ENCODE measurements at regions of chr11 and their contacts with region 1.

Region 1: DNA sequence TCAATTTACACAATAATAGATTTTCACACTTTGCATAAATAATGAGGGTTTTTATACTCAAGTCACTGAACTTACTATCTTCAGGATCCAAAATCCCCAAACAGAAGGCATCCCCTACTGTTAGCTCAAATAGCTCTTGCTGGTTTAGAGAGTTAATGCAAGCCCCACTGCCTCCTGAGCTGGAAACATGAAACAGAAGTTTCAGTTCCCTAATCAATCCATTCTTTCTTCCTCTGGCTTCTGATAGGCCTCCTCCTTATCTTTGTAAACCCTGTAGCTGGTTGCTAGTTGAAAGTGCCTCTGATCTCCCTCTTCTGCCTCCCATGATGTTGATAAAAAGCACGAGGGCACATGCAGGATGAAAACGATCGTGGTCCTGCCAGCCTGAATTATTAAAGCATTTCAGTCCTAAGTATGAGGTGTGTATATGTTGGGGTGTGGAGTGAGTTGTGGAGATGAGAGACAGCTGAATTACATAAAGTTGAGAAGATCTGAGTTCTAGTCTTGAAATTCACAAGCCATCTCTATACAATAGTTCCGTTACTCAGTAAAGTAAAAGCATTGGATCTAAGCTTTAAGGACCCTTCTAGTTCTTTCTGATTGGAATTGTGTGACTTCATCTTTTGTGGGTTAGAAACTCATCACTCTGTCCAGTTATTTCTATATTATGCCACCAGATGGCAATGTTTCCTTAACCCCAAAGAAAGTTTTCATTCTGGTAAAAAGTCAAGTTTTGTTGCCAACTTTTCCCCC is 35.0 kb upstream of the EHF start:
- DNase-seq: no peak
- H3K4me3 ChIP-seq: no peak overlapping the region
- H3K27ac ChIP-seq: no peak overlapping the region
- H3K4me1 ChIP-seq: peaks cover 0 to 6% (median 2%) of the 10 kb centered on the region in 4 experiments; a peak in 2 of 7 replicates
- H3K27me3 ChIP-seq: no peaks in the 10 kb centered on the region
- CTCF ChIP-seq: peak in 2 of 3 experiments; percentile 40 to 58; a peak in 2 of 4 replicates
- EP300 ChIP-seq: no peak
- POLR2A ChIP-seq: no peak
- RAD21 ChIP-seq: peak; percentile 76 to 81

Region 2: GRCh38 chr11:34468209-34468841 is 117.6 kb before region 1 on chr11:
- CTCF ChIA-PET with region 1: no interaction called
- POLR2A ChIA-PET with region 1: no interaction called
- DNase-seq: peak; percentile 7 to 57
- H3K4me3 ChIP-seq: no peak overlapping the region
- H3K27ac ChIP-seq: no peak overlapping the region
- H3K4me1 ChIP-seq: no peaks in the 10 kb centered on the region
- H3K27me3 ChIP-seq: no peaks in the 10 kb centered on the region
- CTCF ChIP-seq: peak; percentile 2 to 74 (median 68)
- EP300 ChIP-seq: no peak
- POLR2A ChIP-seq: no peak
- RAD21 ChIP-seq: peak; percentile 77 to 79

Region 3: GRCh38 chr11:34565417-34566207 is 20.3 kb before region 1 on chr11:
- CTCF ChIA-PET with region 1: interaction called, 28 read pairs
- POLR2A ChIA-PET with region 1: no interaction called
- DNase-seq: peak in 1 of 2 experiments; percentile 17
- H3K4me3 ChIP-seq: no peak overlapping the region
- H3K27ac ChIP-seq: no peak overlapping the region
- H3K4me1 ChIP-seq: 0 out of 7 replicates have a peak, but pooled peaks cover 0 to 2% (median 0%) of the 10 kb centered on the region in 4 experiments
- H3K27me3 ChIP-seq: no peaks in the 10 kb centered on the region
- CTCF ChIP-seq: peak; percentile 60 to 89 (median 77)
- EP300 ChIP-seq: no peak
- POLR2A ChIP-seq: no peak
- RAD21 ChIP-seq: peak; percentile 86 to 90

Region 4: DNA sequence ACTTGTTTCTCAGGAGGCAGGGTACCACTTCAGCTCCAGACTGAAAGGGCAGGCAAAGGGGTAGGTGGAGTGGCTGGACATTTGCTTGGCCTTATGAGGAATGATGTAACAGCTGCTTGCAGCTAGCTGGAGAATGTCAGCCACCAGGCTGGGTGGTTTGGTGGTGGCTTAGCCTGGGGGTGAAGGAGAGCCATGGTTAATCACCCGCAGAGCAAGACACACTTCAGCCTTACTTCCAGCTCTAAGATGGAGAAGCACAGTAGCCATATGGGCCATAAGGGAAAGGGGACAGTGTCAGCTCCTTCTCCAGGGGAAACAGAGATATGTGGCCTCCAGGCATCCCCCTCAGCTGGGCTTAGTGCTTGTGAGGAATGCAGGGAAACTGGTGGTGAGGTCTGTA is 184.3 kb after region 1 on chr11:
- CTCF ChIA-PET with region 1: interaction called, 10 read pairs
- POLR2A ChIA-PET with region 1: no interaction called
- DNase-seq: no peak
- H3K4me3 ChIP-seq: no peak overlapping the region
- H3K27ac ChIP-seq: no peak overlapping the region
- H3K4me1 ChIP-seq: no peaks in the 10 kb centered on the region
- H3K27me3 ChIP-seq: no peaks in the 10 kb centered on the region
- CTCF ChIP-seq: no peak
- EP300 ChIP-seq: no peak
- POLR2A ChIP-seq: no peak
- RAD21 ChIP-seq: no peak

Region 5: GRCh38 chr11:34840736-34841386 is 254.9 kb after region 1 on chr11:
- CTCF ChIA-PET with region 1: interaction called, 16 read pairs
- POLR2A ChIA-PET with region 1: no interaction called
- DNase-seq: no peak
- H3K4me3 ChIP-seq: no peak overlapping the region
- H3K27ac ChIP-seq: no peak overlapping the region
- H3K4me1 ChIP-seq: peaks cover 0 to 4% (median 0%) of the 10 kb centered on the region in 4 experiments; a peak in 2 of 7 replicates
- H3K27me3 ChIP-seq: no peaks in the 10 kb centered on the region
- CTCF ChIP-seq: peak; percentile 60 to 84 (median 62)
- EP300 ChIP-seq: no peak
- POLR2A ChIP-seq: no peak
- RAD21 ChIP-seq: peak; percentile 51 to 57

Region 6: DNA sequence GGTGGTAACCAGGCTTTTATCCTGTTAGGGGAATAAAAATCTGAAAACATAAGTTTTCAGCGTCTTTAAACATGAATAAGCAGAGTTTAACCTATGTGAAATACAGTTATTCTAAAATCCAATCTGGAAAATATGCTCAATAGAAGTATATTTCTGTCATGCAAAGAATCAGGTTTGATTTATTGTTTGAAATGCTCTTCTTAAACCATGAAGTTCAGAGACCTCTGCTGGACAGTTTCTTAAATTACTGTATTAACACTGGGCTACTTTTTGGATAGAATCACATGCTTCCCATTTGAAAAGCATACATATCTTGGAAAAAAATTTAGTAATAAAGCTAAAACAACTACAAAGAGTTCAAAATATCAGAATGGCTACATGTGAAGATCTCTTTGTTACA is 304.9 kb after region 1 on chr11:
- CTCF ChIA-PET with region 1: interaction called, 48 read pairs
- POLR2A ChIA-PET with region 1: no interaction called
- DNase-seq: no peak
- H3K4me3 ChIP-seq: no peak overlapping the region
- H3K27ac ChIP-seq: no peak overlapping the region
- H3K4me1 ChIP-seq: no peaks in the 10 kb centered on the region
- H3K27me3 ChIP-seq: no peaks in the 10 kb centered on the region
- CTCF ChIP-seq: peak in 1 of 3 experiments; percentile 29; a peak in 2 of 4 replicates
- EP300 ChIP-seq: no peak
- POLR2A ChIP-seq: no peak
- RAD21 ChIP-seq: peak; percentile 44 to 54

Region 7: GRCh38 chr11:34907934-34908593 is 322.2 kb after region 1 on chr11:
- CTCF ChIA-PET with region 1: interaction called, 10 read pairs
- POLR2A ChIA-PET with region 1: no interaction called
- DNase-seq: no peak
- H3K4me3 ChIP-seq: peak overlapping the region in 1 of 4 experiments; percentile 3; a peak in 1 of 8 replicates
- H3K27ac ChIP-seq: no peak overlapping the region
- H3K4me1 ChIP-seq: peaks cover 0 to 6% (median 2%) of the 10 kb centered on the region in 4 experiments; a peak in 3 of 7 replicates
- H3K27me3 ChIP-seq: no peaks in the 10 kb centered on the region
- CTCF ChIP-seq: no peak
- EP300 ChIP-seq: no peak
- POLR2A ChIP-seq: no peak
- RAD21 ChIP-seq: no peak

Measured in H1 (cell line).